ENCODE measurements at regions of chr15 and their contacts with region 1.

Region 1: DNA sequence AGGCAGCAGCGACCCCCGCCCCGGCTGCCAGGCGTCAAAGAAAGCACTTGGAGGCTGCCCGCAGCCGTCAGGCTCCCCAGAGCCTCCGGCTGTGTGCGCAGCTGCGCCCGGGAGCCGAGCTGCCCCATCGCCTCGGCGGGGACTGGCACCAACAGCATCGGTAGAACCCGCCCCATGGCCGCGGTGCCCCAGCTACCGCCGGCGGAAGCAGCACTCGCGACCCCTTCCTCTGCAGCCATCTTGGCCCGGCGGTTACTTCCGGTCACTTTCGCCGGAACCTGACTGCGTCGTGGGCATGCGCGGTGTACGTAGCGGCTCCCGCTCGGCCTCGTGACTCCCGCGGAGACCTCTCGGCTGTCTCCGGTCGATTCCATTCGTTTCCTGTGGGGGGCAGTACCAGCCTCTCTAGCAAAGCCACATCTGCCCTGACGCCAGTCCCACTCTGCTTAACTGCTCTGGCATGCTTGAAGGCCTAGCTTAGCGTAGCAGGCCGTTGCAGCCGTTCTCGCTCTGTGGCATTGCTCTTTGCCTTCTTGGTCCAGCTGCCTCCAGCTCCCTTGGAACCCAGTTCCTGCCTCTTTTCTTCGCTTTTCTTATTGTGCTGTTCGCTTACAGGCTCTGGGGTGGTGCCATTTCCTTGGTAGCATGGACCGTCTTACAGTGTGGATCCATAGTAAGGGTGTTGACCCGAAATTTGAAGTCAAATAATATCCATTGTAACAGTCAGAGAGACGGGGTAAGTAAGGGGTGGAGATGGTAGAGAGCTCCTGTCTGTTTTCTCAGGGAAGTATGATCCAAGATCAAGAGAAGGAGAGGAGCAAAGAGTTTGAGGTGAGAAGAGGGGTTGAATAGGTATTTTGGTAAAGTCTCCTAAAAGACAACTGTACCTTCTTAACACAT is at the start of gene SPG11:
- DNase-seq: peak; percentile 77 to 96
- ATAC-seq: peak; percentile 95
- H3K4me3 ChIP-seq: peak within 1 kb of the TSS; percentile 82
- H3K27ac ChIP-seq: peak within 1 kb of the TSS; percentile 98
- H3K4me1 ChIP-seq: peaks cover 17% of the 10 kb centered on the region; the same call in 2 of the 3 replicates
- CTCF ChIP-seq: peak; percentile 64
- EP300 ChIP-seq: no peak
- POLR2A ChIP-seq: peak; percentile 94
- RAD21 ChIP-seq: peak; percentile 81 to 83
- polyA plus RNA-seq, gene SPG11: 26.9 and 33.9 TPM in 2 replicates

Region 2: GRCh38 chr15:44647036-44647435 is 16.6 kb before region 1 on chr15:
- CTCF ChIA-PET with region 1: interaction called, 9 read pairs
- POLR2A ChIA-PET with region 1: interaction called, 10 read pairs
- DNase-seq: no peak
- ATAC-seq: no peak
- H3K4me3 ChIP-seq: no peak overlapping the region
- H3K27ac ChIP-seq: no peak overlapping the region
- H3K4me1 ChIP-seq: no peaks in the 10 kb centered on the region
- CTCF ChIP-seq: no peak
- EP300 ChIP-seq: no peak
- POLR2A ChIP-seq: no peak
- RAD21 ChIP-seq: no peak

Region 3: DNA sequence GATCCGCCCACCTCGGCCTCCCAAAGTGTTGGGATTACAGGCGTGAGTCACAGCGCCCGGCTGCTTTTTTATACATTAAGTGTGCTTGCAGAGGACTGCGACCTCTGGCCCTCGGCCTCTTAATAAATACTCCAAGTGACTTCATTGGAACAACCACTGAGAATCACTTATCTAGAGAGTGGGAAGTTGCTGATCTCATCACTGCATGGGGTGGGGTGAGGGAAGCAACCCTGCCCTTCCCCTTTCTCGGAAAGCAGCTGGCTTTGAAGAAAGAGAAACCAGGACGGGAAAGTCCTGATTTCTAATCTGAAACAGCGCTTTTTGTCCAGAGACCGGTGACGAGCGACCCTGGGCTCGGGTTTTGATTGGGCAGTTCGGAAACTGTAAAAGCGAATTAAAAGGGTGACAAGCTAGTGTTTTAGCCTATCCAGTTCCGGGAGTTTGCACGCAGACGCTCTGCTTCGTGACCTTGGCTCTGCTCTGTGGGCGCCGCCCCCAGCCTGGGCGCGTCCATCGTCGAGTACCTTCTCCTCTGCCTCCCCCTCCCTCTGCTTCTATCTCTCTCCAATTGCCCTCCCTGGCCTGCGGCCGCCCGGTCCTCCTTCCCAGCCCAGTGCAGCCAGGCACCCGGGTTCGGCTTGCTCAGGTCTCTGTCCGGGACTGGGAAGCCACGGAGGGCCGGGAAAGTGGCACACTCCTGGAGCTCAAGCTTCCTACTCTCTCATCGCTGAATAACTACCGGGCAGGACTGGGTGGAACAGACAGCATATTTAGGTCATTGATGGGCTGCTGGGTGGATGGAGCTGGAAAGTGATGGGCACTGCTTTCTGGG is 65.1 kb after region 1 on chr15:
- CTCF ChIA-PET with region 1: interaction called, 13 read pairs
- POLR2A ChIA-PET with region 1: interaction called, 17 read pairs
- DNase-seq: peak; percentile 73 to 95
- ATAC-seq: peak; percentile 95 to 97
- H3K4me3 ChIP-seq: peak overlapping the region; percentile 58
- H3K27ac ChIP-seq: peak overlapping the region; percentile 83 to 93
- H3K4me1 ChIP-seq: peaks cover 33% of the 10 kb centered on the region
- CTCF ChIP-seq: no peak
- EP300 ChIP-seq: no peak
- POLR2A ChIP-seq: peak; percentile 65
- RAD21 ChIP-seq: no peak

Region 4: GRCh38 chr15:44738340-44738984 is 74.8 kb after region 1 on chr15:
- CTCF ChIA-PET with region 1: interaction called, 46 read pairs
- POLR2A ChIA-PET with region 1: interaction called, 3 read pairs
- DNase-seq: peak; percentile 21 to 43
- ATAC-seq: no peak
- H3K4me3 ChIP-seq: no peak overlapping the region
- H3K27ac ChIP-seq: no peak overlapping the region
- H3K4me1 ChIP-seq: no peaks in the 10 kb centered on the region
- CTCF ChIP-seq: peak; percentile 68
- EP300 ChIP-seq: no peak
- POLR2A ChIP-seq: no peak
- RAD21 ChIP-seq: peak; percentile 76 to 79